ENCODE measurements at regions of chr3 and their contacts with region 1.

Region 1: GRCh38 chr3:47522082-47522987 is 8.8 kb upstream of the ELP6 start:
- DNase-seq: peak; percentile 88
- CTCF ChIP-seq: peak; percentile 91

Region 2: DNA sequence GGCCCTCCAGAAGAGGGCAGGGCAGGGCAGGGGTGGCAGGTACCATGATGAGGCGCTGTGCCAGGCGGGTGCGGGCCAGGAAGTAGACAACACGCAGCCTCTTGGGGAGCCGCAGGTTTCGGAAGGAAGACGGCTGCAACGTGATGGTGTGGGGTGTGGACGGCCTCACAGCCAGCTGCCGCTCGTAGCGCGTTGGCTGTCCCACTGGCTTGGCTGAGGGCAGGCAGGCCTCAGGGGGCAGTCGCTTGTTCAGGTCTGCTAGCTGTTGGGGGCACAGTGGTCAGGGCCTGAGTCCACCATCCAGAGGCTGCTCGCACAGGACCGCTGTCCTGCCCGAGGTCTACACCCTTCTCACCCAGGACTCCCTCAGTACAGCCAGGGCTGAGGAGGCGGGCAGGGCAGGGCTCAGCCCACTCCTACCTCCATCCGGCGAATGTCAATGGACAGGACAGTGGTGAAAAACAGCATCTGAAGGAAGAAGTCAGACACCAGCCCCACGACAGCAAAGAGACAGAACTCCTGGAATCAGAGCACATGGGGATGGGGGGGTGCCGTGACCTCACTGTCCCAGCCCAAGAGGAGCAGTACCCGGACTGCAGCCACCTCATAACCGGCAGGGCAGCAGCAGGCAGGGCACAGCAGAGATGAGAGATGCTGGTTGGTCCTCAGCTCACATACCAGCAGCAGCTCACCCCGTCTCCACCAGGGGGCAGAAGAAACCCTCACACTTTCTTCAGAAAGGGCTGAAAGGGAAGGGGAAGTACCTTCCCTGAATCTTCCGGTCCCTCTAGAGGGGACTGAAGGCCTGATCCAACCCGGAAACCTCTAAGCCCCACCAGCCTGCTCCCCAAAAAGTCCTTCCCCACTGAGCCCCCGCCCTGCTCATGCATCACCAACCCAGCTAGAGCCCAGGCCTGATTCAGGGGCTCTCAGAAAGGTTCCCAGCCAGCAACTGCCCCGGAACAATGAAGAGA is 101.5 kb before region 1 on chr3:
- CTCF ChIA-PET with region 1: interaction called, 22 read pairs
- POLR2A ChIA-PET with region 1: no interaction called
- DNase-seq: peak; percentile 94
- CTCF ChIP-seq: peak; percentile 89

Region 3: DNA sequence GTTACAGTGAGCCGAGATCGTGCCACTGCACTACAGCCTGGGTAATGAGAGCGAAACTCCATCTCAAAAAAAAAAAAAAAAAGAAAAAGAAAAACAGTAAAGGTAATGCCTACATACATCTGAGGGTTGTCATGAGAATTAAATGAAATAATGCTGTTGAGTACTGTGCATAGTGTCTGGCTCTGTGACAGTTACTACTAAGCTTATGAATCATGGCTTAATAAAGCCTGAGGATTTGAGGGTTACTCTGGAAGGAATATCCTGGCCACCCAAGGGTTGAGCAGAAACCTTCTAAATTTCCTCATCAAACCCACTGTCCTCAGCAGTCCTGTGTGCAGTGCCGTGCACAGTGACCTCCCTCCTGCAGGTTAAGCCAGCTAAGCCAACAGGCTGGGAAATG is 17.9 kb after region 1 on chr3:
- CTCF ChIA-PET with region 1: interaction called, 17 read pairs
- POLR2A ChIA-PET with region 1: no interaction called
- DNase-seq: peak; percentile 4
- CTCF ChIP-seq: no peak

Region 4: DNA sequence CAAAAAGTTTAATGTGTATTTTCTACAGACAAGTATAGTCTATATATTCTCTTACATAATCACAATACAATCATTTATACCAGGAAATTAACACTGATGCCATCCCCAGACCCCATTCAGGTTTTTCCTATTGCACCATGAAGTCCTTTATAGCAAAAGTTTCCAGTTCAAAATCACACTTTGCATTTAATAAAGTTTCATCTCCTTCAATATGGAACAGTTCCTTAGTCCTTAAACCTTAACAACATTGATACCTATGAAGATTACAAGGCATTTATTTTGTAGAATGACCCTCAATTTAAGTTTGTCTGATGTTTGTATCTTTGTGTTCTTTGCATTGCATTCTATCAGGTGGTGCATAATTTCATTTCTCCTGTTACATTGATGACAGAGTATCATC is 261.3 kb after region 1 on chr3:
- CTCF ChIA-PET with region 1: interaction called, 56 read pairs
- POLR2A ChIA-PET with region 1: interaction called, 4 read pairs
- DNase-seq: no peak
- CTCF ChIP-seq: no peak

Region 5: GRCh38 chr3:47802734-47803477 is 280.6 kb after region 1 on chr3 and contains the start of gene DHX30:
- CTCF ChIA-PET with region 1: interaction called, 22 read pairs
- POLR2A ChIA-PET with region 1: no interaction called
- DNase-seq: peak; percentile 94
- CTCF ChIP-seq: no peak

Region 6: DNA sequence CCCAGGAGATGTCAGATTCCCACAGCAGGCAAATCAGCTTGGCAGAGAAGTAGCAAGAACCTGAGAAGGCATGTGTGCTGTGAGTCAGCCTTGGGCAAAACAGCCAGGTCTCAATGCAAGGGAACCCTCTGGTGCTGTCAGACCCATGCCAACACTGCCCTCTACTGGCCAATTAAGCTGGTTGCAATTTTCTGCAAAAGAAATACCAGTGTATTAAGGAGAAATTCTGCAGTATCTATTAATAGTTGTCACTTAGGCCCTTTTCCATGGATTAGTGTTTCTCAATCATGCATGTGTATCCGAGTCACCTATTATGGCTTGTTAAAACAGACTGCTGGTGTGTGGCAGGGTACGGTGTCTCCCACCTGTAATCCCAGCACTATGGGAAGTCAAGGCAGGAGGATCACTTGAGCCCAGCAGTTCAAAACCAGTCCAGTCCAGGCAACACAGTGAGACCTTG is 467.7 kb after region 1 on chr3:
- CTCF ChIA-PET with region 1: interaction called, 23 read pairs
- POLR2A ChIA-PET with region 1: interaction called, 9 read pairs
- DNase-seq: peak; percentile 70
- CTCF ChIP-seq: peak; percentile 85

Measured in GM10248 (cell line).